HEK293 (cell line): ENCODE measurements at regions of chr1 and their contacts with region 1.

Region 1: GRCh38 chr1:159798893-159799292 is 3.3 kb upstream of the FCRL6 start:
- H3K4me3 ChIP-seq: no peak overlapping the region
- H3K27ac ChIP-seq: no peak overlapping the region
- H3K4me1 ChIP-seq: no peaks in the 10 kb centered on the region
- CTCF ChIP-seq: peak; percentile 46; the same call in 1 of the 2 replicates

Region 2: DNA sequence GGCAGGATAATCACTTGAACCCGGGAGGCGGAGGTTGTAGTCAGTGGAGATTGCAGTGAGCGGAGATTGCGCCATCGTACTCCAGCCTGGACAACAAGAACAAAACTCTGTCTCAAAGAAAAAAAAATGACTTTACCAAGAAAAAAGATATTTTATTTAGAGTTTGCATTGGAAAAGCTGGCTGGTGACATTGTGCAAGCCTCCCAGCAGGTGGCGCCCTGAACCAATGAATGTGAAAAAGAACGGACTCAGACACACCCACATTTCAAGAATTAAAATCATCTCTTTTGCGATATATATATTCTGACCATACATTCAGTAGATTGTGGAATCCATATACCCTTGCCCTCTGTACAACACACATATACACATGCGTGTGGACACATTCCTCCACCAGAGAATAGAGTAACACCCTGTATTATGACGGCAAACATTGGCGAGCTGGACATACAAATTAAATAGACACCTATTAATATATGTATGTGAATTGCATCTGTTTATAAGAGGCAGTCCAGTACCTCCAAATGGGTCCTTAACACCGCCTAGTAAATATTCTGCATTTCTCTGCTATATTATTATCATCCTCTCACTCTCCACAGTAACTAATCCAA is 666.5 kb before region 1 on chr1:
- CTCF ChIA-PET with region 1: interaction called, 10 read pairs
- POLR2A ChIA-PET with region 1: no interaction called
- H3K4me3 ChIP-seq: no peak overlapping the region
- H3K27ac ChIP-seq: no peak overlapping the region
- H3K4me1 ChIP-seq: no peaks in the 10 kb centered on the region
- CTCF ChIP-seq: no peak

Region 3: GRCh38 chr1:159664247-159664646 is 134.6 kb before region 1 on chr1:
- CTCF ChIA-PET with region 1: no interaction called
- POLR2A ChIA-PET with region 1: no interaction called
- H3K4me3 ChIP-seq: no peak overlapping the region
- H3K27ac ChIP-seq: no peak overlapping the region
- H3K4me1 ChIP-seq: no peaks in the 10 kb centered on the region
- CTCF ChIP-seq: no peak

Region 4: DNA sequence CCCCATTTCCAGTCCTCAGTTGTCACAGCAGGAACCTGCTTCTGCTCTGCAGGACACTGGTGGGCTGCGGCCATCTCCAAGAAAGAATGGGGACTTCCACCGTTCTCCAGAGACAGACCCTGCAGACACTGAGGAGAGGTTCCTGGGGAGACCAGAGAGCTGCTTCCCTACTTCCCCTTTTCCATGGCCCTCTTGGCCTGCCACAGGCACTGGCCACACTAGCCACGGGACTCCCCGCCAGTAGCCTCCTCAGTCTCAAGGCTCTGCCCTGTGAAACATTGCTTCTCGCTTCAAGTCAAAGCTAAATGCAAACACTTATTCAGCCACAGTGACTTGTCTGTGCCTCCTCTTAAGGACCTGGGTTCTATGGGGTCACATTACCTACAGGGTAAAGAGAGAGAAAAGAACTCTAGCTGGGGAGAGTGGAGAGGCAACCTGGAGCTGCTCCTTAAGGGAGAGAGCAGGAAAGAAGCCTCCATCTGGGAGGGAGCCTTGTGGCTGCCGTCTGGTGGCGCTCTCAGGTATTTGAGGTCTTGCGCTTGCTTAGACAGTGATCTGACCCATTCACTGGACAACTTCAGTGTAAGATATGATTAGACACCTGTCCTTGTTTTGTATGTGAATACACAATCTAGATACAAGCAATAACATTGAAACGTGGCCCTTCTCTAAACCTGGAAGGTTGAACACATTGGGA is 22.4 kb after region 1 on chr1:
- CTCF ChIA-PET with region 1: interaction called, 15 read pairs
- POLR2A ChIA-PET with region 1: interaction called, 4 read pairs
- H3K4me3 ChIP-seq: no peak overlapping the region
- H3K27ac ChIP-seq: no peak overlapping the region
- H3K4me1 ChIP-seq: no peaks in the 10 kb centered on the region
- CTCF ChIP-seq: no peak

Region 5: DNA sequence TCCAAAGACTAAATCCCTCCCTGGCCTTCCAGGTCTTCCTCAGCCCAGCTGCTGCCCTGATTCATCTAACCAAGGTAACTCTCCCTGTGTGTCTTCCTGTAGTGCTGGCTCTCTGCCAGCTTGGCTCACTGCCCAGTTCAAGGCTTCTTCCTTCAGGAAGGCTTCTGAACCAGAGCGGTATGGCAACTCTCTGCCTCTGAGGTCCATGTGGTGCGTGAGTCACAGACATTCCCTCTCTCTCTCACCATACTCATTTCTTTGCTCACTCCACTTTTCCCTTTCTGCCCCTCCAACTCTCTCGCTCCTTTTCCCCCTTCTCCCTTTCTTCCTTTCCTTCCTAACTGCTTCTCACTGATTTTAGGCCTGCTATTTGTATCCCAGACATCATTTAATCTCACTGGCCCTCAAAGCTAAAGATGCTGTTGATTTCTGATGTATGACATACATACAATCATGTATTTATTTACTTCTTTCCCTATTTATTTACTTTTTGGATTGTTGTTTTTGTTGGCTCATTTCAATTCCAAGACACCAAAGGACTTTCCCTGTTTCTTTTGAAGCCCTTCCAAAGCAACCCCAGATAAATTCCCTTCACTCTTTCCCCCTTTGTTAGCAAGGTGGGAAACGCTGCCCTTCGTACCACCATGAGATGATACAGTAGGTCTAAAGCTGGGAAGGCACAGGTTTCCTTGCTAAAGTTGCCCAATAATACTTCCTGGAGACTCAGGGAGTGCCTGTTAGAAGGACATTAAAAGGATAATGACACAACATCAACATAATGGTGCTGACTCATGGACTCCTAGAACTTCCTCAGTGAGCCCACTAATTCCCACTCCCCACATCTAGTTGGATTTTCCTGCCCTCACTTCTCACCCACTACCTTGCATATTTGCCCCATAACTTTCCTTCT is 83.3 kb after region 1 on chr1:
- CTCF ChIA-PET with region 1: interaction called, 415 read pairs
- POLR2A ChIA-PET with region 1: no interaction called
- H3K4me3 ChIP-seq: no peak overlapping the region
- H3K27ac ChIP-seq: no peak overlapping the region
- H3K4me1 ChIP-seq: peaks cover 11% of the 10 kb centered on the region
- CTCF ChIP-seq: no peak

Region 6: DNA sequence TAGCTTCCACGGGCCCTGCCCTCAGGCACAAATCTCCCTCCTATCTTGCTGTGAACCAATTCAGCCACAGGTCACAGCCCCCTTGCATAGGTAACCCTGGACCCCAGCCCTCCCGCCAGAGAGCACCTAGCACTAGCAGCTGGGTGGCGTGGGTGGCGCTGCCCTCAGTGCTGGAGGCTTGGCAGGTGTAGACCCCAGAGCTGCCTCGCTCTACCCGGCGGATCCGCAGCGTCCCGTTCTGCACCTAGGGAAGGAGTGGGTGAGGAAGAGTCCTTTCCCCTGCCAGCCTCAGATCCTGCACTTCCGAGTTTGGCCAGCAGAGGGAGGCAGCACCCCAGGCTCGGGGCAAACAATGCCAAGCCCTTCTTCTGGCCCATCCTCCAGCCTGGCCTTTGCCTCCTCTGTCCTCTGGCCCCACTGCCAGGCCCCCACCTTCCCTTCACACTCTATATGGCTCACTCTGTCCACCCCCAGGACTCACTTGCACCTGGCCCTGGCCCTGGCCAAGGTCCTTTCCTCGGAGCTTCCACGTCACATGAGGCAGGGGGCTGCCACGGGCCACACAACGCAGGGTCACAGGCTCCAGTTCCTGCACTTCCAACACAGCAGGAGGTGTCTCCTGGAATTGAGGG is 137.5 kb after region 1 on chr1:
- CTCF ChIA-PET with region 1: interaction called, 13 read pairs
- POLR2A ChIA-PET with region 1: no interaction called
- H3K4me3 ChIP-seq: no peak overlapping the region
- H3K27ac ChIP-seq: no peak overlapping the region
- H3K4me1 ChIP-seq: no peaks in the 10 kb centered on the region
- CTCF ChIP-seq: peak; percentile 96